Right cardiac atrium (tissue), 5 donors: ENCODE measurements at regions of chr12 and their contacts with region 1.

Region 1: GRCh38 chr12:56766535-56766934 is 3.4 kb downstream of the HSD17B6 start:
- DNase-seq: no peak
- ATAC-seq: peak in 1 of 2 donors; percentile 57
- H3K4me3 ChIP-seq: no peak overlapping the region
- H3K27ac ChIP-seq: no peak overlapping the region
- H3K4me1 ChIP-seq: no peaks in the 10 kb centered on the region
- H3K27me3 ChIP-seq: no peaks in the 10 kb centered on the region

Region 2: DNA sequence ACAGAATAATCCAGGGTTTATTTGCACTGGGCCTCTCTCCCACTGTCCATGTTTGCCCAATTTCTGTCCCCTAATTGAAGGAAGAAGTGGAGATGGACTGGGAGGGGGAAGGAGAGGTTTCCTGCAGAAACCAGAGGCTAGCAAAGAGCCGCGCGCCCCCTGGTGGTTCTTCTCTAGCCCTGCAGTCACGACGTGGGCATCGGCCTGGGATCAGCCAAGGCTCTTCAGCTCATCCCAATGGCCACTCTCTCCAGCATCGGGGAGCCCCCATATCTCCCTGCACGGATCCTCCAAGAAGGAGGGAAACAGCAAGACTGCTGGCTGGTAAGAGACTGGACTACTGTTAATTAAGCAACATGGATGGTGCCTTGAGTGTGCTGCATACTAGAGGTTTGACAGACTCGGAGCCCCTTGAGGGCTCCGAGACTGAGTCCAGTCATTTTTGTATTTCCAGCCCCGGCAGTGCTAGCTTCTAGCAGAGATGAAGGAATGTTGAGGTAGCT is 221.1 kb after region 1 on chr12:
- intact Hi-C with region 1: loop called (anchors 2 to 10 kb)
- DNase-seq: peak; percentile 80 to 91 (median 90)
- ATAC-seq: peak; percentile 81 to 84
- H3K4me3 ChIP-seq: no peak overlapping the region
- H3K27ac ChIP-seq: no peak overlapping the region
- H3K4me1 ChIP-seq: peaks cover 6% of the 10 kb centered on the region
- H3K27me3 ChIP-seq: no peaks in the 10 kb centered on the region

Region 3: DNA sequence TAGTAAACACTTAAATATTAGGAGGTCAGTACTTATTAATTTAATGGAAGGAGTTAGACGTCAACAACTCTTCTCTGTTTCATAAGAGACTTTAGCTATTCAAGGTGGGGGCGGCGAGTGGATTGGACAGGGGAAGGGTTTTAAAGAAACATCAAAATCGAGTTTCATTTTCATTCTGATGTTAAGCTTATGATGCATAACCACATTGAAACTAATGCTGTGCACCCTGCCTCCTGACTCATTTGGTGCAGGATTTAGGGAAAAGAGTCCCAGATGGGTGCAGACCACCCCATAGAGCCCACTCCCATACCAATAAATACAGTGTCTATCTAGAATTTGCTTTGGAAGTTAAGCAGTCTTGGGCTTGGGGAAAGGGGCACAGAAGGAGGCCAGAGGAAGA is 232.4 kb after region 1 on chr12:
- intact Hi-C with region 1: loop called in 1 of 4 experiments (anchors 10 kb)
- DNase-seq: no peak
- ATAC-seq: no peak
- H3K4me3 ChIP-seq: no peak overlapping the region
- H3K27ac ChIP-seq: no peak overlapping the region
- H3K4me1 ChIP-seq: peaks cover 2% of the 10 kb centered on the region
- H3K27me3 ChIP-seq: no peaks in the 10 kb centered on the region

Region 4: DNA sequence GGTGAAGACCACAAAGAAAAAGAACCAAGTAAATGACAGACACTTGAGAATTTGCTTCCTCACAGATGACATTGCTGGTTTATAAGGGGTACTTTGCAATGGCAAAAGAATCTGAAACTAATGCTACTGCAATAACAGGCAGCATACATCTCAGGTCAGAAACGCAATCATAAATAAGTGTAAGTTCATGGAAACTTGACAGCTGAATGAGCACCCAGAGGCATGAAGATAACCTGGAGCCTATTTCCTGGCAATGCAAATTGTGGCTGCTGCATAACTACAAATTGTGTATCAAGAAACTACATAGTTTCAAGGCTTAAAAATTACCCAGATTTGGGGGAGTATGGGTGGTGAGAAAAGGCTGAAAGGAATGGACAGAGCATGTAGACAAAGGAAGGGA is 291.9 kb after region 1 on chr12:
- intact Hi-C with region 1: loop called in 1 of 4 experiments (anchors 5 kb)
- DNase-seq: no peak
- ATAC-seq: no peak
- H3K4me3 ChIP-seq: no peak overlapping the region
- H3K27ac ChIP-seq: no peak overlapping the region
- H3K4me1 ChIP-seq: no peaks in the 10 kb centered on the region
- H3K27me3 ChIP-seq: no peaks in the 10 kb centered on the region